ENCODE measurements at regions of chr7 and their contacts with region 1.

Region 1: DNA sequence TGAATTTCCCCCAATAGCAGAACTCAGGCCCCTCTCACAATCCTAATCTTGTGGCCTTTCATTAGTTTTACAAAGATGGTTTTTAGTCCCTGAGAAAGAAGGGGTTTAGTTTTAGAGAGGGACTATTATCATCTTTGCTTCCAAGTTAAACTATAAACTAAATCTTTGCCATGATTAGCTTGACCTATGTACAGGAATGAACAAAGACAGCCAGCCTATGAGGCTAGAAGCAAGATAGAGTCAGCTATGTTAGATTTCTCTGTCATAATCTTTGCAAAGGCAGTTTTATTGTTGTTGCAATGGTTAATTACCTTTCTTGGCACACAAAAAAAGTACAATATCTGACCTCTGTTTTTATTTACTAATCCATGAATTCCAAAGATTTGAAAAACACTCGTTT is 19.1 kb downstream of the RNF133 start:
- DNase-seq: no peak
- ATAC-seq: peak; percentile 79
- H3K4me3 ChIP-seq: peak overlapping the region; percentile 23 to 50 (median 24); a peak in 4 of 6 replicates
- H3K27ac ChIP-seq: peak overlapping the region; percentile 95
- H3K4me1 ChIP-seq: peaks cover 49% of the 10 kb centered on the region
- H3K27me3 ChIP-seq: no peaks in the 10 kb centered on the region
- CTCF ChIP-seq: no peak
- EP300 ChIP-seq: no peak
- POLR2A ChIP-seq: no peak
- RAD21 ChIP-seq: no peak

Region 2: DNA sequence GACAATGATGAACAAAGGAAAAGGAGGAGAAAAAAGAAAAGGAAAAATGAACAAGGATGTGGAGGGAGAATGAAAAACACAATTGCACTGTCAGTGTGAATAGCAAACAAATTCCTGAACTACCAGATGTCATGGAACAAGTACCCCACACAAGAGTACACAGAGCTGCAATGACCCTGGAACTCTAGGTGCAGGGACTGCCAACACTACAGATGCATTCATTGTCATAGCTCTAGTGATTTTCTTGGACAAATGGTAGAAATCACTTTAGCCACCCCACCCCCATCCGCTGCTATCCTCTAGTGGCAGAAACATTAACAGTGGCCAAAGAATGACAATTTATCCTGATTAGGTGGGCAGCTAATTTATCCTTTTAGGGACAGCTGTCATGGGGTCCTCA is 16.0 kb after region 1 on chr7:
- CTCF ChIA-PET with region 1: no interaction called
- POLR2A ChIA-PET with region 1: interaction called, 4 read pairs
- in situ Hi-C with region 1: no loop called
- intact Hi-C with region 1: loop called (anchors 1 kb)
- DNase-seq: peak; percentile 91
- ATAC-seq: peak; percentile 99
- H3K4me3 ChIP-seq: no peak overlapping the region
- H3K27ac ChIP-seq: peak overlapping the region; percentile 75
- H3K4me1 ChIP-seq: peaks cover 34% of the 10 kb centered on the region
- H3K27me3 ChIP-seq: no peaks in the 10 kb centered on the region
- CTCF ChIP-seq: peak; percentile 44
- EP300 ChIP-seq: peak in 1 of 2 experiments; percentile 49; a peak in 2 of 4 replicates
- POLR2A ChIP-seq: no peak
- RAD21 ChIP-seq: 0 out of 2 replicates have a peak, but pooled peaks have one; percentile 21

Region 3: GRCh38 chr7:122750389-122750788 is 70.6 kb after region 1 on chr7:
- CTCF ChIA-PET with region 1: no interaction called
- POLR2A ChIA-PET with region 1: interaction called, 4 read pairs
- in situ Hi-C with region 1: no loop called
- intact Hi-C with region 1: loop called (anchors 2 kb)
- DNase-seq: no peak
- ATAC-seq: no peak
- H3K4me3 ChIP-seq: no peak overlapping the region
- H3K27ac ChIP-seq: no peak overlapping the region
- H3K4me1 ChIP-seq: peaks cover 41% of the 10 kb centered on the region
- H3K27me3 ChIP-seq: no peaks in the 10 kb centered on the region
- CTCF ChIP-seq: no peak
- EP300 ChIP-seq: no peak
- POLR2A ChIP-seq: no peak
- RAD21 ChIP-seq: no peak

Measured in HepG2 (cell line).